ENCODE measurements at regions of chr19 and their contacts with region 1.

Region 1: DNA sequence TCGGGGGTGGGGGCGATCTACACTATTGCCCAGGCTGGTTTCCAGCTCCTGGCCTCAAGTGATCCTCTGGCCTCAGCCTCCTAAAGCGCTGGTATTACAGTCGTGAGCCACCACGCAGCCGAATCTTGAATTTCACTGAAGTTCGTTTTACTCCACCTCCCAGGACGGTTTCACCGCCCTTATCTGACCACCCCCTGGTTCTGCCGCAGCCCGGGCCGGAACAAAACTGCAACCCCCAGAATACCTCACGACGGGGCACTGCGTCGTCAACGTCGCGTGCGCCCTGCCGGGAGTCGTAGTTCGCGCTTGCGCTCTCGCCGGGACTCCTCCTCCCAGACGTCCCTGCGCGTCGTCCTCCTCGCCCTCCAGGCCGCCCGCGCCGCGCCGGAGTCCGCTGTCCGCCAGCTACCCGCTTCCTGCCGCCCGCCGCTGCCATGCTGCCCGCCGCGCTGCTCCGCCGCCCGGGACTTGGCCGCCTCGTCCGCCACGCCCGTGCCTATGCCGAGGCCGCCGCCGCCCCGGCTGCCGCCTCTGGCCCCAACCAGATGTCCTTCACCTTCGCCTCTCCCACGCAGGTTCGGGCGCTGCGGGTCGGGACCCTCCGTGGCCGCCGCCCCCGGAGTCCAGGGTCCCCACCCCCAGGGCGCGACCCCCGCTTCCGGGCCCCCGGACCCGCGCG is at the start of gene ATP5F1D:
- DNase-seq: peak; percentile 90 to 97 (median 93)
- H3K4me3 ChIP-seq: peak within 1 kb of the TSS; percentile 69 to 99 (median 91)
- H3K27ac ChIP-seq: peak within 1 kb of the TSS; percentile 80 to 100 (median 98)
- H3K27me3 ChIP-seq: no peaks in the 10 kb centered on the region
- CTCF ChIP-seq: peak in 38 of 56 donors; percentile 7 to 63 (median 32)
- total RNA-seq, gene ATP5F1D: 170 to 316 (median 242) TPM

Region 2: GRCh38 chr19:984165-984967 is 257.2 kb before region 1 on chr19 and contains the start of gene WDR18:
- intact Hi-C with region 1: loop called in 1 of 2 experiments (anchors 5 kb)
- DNase-seq: peak; percentile 92 to 97 (median 95)
- H3K4me3 ChIP-seq: peak within 1 kb of the TSS; percentile 59 to 99 (median 91)
- H3K27ac ChIP-seq: peak within 1 kb of the TSS; percentile 63 to 99 (median 87)
- H3K27me3 ChIP-seq: peaks cover 0 to 1% (median 0%) of the 10 kb centered on the region in 45 donors
- CTCF ChIP-seq: peak in 51 of 56 donors; percentile 14 to 71 (median 44)
- total RNA-seq, gene WDR18: 20.6 to 51.2 (median 30.3) TPM

Region 3: DNA sequence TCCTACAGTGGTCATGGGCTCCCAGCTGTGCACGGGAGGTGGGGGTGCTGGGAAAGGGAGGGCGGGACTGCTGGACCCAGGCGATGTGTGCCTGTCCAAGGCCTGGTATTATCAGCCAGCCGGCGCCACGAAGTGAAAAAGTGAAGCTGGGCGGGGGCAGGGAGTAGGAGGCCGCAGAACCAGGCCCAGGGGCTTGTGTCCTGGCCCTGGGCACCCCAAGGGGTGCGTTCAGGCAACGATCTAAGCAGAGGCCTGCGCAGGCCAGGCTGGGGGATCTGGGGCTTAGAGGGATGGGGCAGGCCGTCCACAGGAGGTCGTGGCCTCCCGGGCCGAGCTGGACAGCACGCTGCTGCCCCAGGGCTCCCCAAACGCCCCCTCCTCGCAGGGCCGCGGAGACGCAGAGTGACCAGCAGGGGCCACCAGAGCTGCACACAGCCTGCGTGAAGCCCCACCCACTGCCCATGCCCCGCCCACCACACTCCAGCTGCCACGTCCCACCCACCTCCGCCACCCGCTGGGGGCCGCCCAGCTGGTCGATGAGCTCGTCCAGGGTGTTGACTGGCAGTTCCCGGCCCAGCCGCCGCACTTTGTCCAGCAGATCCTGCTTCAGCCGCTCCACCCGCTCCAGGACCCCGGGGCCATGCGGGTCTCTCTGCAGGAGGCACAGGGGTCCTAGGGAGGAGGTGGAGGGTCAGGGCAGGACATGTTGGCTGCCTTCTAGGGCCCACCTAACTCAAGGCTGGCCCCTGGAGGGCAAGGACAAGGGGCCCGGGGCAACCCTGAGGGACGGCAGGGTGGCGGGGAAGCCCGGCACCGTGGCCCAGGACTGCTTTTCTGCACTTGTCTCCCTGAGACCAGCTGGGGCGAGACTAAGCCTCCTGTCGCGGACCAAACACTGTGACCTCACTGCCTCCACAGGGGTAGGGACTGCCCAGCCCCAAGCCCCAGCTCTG is 128.2 kb before region 1 on chr19:
- intact Hi-C with region 1: loop called in 1 of 2 experiments (anchors 1 kb)
- DNase-seq: peak; percentile 62 to 98 (median 96)
- H3K4me3 ChIP-seq: peak overlapping the region in 36 of 59 donors; percentile 0 to 54 (median 24)
- H3K27ac ChIP-seq: peak overlapping the region; percentile 37 to 95 (median 89)
- H3K27me3 ChIP-seq: no peaks in the 10 kb centered on the region
- CTCF ChIP-seq: peak; percentile 70 to 99 (median 96)

Region 4: DNA sequence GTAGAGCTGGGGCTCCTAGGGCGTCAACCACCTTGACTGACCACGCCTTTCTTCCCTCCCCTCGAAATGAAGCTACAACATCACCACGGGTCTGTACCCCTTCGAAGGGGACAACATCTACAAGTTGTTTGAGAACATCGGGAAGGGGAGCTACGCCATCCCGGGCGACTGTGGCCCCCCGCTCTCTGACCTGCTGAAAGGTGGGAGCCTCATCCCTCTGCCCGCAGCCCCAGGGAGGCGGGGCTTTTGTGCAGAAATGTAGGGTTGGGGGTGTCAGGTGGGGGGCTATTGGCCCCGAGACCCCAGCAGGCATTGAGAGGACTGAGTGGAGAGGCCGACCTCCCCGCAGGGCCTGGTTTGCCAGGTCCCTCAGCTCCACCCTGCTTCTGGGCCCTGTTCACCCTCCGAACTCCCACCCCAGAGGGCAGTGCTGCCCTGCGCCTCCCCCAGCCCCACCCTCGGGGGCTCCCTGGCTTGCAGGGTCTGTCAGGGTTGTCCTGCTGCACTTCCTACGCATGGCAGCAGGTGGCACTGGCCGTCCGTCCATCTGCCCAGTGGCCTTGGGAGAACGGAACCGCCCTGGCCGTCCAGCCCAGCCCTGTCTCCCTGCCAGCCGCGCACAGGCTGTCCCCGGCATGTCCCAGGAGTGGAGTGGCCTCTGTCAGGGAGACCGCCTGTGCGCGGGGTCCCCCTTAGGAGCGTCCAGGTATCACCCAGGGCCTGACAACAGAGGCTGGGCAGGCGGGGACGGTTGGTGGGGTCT is 20.2 kb before region 1 on chr19:
- intact Hi-C with region 1: loop called in 1 of 2 experiments (anchors 2 kb)
- DNase-seq: peak in 8 of 10 donors; percentile 62 to 88 (median 70)
- H3K4me3 ChIP-seq: peak overlapping the region in 2 of 59 donors; percentile 5 to 24
- H3K27ac ChIP-seq: peak overlapping the region in 40 of 59 donors; percentile 1 to 91 (median 51)
- H3K27me3 ChIP-seq: no peaks in the 10 kb centered on the region
- CTCF ChIP-seq: peak; percentile 33 to 87 (median 73)

Region 5: DNA sequence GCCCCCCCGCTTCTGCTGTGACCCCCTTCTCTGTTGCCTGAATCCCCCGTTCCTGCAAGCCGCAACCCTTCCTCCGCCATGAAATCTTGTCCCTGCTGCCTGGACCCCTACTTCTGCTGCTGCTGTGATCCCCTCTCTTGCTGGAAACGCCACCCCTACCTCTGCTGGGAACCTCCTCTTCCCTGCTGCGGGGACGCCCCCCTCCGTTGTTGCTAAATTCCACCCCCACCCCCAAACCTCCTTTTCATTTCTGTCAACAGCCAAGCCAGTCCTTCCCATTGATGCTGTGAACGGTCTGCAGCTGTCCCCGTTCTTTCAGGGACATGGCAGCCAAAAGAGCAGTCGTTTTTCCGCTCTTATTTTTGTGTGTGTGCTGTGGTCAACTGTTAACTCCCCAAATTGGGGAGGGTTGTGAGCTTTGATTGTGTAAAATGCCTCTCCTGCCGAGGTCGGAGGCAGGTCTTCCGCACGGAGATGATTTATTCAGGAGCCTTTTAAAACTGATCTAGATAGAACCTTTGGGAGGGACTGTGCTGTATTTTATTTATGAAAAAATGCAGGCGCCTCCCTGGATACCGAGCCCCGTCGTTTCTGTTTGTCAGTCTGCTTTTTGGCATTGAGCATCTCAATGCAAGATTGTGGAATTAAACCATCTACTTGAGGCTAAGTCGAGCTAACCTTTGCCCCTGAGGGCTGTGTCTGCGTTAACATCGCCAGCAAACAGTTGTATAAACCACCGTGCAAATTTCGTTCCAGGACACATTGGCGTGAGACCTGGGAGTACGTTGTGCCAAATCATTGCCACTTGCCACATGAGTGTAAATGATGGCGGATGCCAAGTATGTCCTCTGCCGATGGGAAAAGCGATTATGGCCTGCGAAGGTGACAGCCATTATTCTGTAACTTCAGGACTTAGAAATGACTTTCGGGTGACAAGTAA is 114.3 kb after region 1 on chr19:
- intact Hi-C with region 1: no loop called
- DNase-seq: peak in 6 of 10 donors; percentile 41 to 71 (median 60)
- H3K4me3 ChIP-seq: peak overlapping the region; percentile 48 to 93 (median 80)
- H3K27ac ChIP-seq: peak overlapping the region; percentile 12 to 100 (median 98)
- H3K27me3 ChIP-seq: no peaks in the 10 kb centered on the region
- CTCF ChIP-seq: no peak

Measured in dorsolateral prefrontal cortex (tissue), 120 donors.